BJ (cell line): ENCODE measurements at regions of chr12 and their contacts with region 1.

Region 1: GRCh38 chr12:56237552-56237951 is 7.7 kb downstream of the SLC39A5 start:
- DNase-seq: no peak
- H3K4me3 ChIP-seq: no peak overlapping the region
- H3K27me3 ChIP-seq: no peaks in the 10 kb centered on the region
- CTCF ChIP-seq: no peak

Region 2: GRCh38 chr12:56258057-56258819 is 20.7 kb after region 1 on chr12 and contains the start of gene ANKRD52:
- CTCF ChIA-PET with region 1: interaction called, 15 read pairs
- POLR2A ChIA-PET with region 1: no interaction called
- DNase-seq: no peak
- H3K4me3 ChIP-seq: peak within 1 kb of the TSS; percentile 81
- H3K27me3 ChIP-seq: no peaks in the 10 kb centered on the region
- CTCF ChIP-seq: no peak
- polyA plus RNA-seq, gene ANKRD52: 21.0 and 26.8 TPM in 2 replicates